ENCODE measurements at regions of chr22 and their contacts with region 1.

Region 1: DNA sequence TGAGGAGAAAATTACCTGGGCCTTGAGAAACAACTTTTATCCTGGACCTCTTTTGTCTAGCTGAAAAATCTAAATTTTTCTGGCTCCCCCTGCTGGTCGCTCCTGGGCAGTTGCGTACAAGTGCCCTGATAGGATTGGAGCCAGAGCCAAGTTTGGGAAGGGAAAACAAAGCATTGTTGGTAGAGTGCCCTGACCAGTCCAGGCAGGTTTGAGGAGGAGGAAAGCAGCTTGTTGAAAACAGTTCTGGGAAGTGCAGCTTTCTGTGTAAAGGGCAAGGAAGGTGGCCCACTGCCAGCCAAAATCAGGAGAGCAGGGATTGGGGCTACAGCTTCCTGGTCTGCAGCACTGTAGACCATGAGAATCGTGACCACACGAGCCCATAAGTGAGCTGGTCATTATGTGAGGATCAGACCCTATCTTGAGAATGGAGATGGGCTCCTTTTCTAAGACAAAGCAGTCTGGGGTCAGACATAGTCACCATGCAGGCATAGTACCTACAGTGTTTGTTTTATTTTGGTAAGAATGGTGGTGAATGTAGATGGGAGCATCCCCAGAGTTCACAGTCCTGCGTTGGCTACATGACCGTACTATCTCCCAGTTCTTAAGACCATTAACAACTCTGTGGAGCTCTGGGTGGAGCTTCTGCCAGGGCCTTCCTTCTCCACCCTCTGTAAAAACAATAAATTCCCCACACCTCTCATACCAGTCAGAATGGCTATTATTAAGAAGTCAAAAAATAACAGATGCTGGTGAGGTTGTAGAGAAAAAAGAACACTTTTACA is 21.3 kb upstream of the PIK3IP1 start:
- DNase-seq: peak; percentile 41 to 90
- H3K4me3 ChIP-seq: no peak overlapping the region
- H3K27ac ChIP-seq: peak overlapping the region; percentile 86
- H3K4me1 ChIP-seq: peaks cover 2 to 5% (median 3%) of the 10 kb centered on the region in 4 experiments; a peak in 6 of 7 replicates
- H3K27me3 ChIP-seq: no peaks in the 10 kb centered on the region
- CTCF ChIP-seq: peak; percentile 69 to 87 (median 76)
- EP300 ChIP-seq: peak in 1 of 2 experiments; percentile 70; a peak in 1 of 3 replicates
- POLR2A ChIP-seq: peak in 1 of 2 experiments; percentile 62; a peak in 2 of 3 replicates
- RAD21 ChIP-seq: peak; percentile 48 to 70; a peak in 3 of 4 replicates

Region 2: GRCh38 chr22:31080848-31081649 is 232.5 kb before region 1 on chr22 and contains the start of gene SMTN:
- CTCF ChIA-PET with region 1: no interaction called
- POLR2A ChIA-PET with region 1: no interaction called
- DNase-seq: peak; percentile 79 to 99
- H3K4me3 ChIP-seq: peak within 1 kb of the TSS; percentile 69 to 80 (median 74)
- H3K27ac ChIP-seq: peak within 1 kb of the TSS; percentile 84; the same call in 1 of the 2 replicates
- H3K4me1 ChIP-seq: peaks cover 0 to 27% (median 16%) of the 10 kb centered on the region in 4 experiments; a peak in 6 of 7 replicates
- H3K27me3 ChIP-seq: peaks cover 0 to 5% (median 2%) of the 10 kb centered on the region in 4 experiments; a peak in 3 of 7 replicates
- CTCF ChIP-seq: no peak
- EP300 ChIP-seq: no peak
- POLR2A ChIP-seq: peak; percentile 76 to 88
- RAD21 ChIP-seq: no peak
- total RNA-seq, gene SMTN: 20.8 and 26.5 TPM in 2 replicates

Region 3: GRCh38 chr22:31173386-31174145 is 140.0 kb before region 1 on chr22:
- CTCF ChIA-PET with region 1: no interaction called
- POLR2A ChIA-PET with region 1: no interaction called
- DNase-seq: no peak
- H3K4me3 ChIP-seq: no peak overlapping the region
- H3K27ac ChIP-seq: no peak overlapping the region
- H3K4me1 ChIP-seq: no peaks in the 10 kb centered on the region
- H3K27me3 ChIP-seq: no peaks in the 10 kb centered on the region
- CTCF ChIP-seq: no peak
- EP300 ChIP-seq: no peak
- POLR2A ChIP-seq: no peak
- RAD21 ChIP-seq: no peak

Region 4: GRCh38 chr22:31290494-31291471 is 22.8 kb before region 1 on chr22:
- CTCF ChIA-PET with region 1: interaction called, 21 read pairs
- POLR2A ChIA-PET with region 1: interaction called, 13 read pairs
- DNase-seq: peak; percentile 53 to 90
- H3K4me3 ChIP-seq: peak overlapping the region; percentile 28 to 62 (median 38)
- H3K27ac ChIP-seq: no peak overlapping the region
- H3K4me1 ChIP-seq: peaks cover 0 to 14% (median 5%) of the 10 kb centered on the region in 4 experiments; a peak in 4 of 7 replicates
- H3K27me3 ChIP-seq: peaks cover 6 to 30% (median 20%) of the 10 kb centered on the region in 4 experiments; a peak in 6 of 7 replicates
- CTCF ChIP-seq: no peak
- EP300 ChIP-seq: no peak
- POLR2A ChIP-seq: peak in 1 of 2 experiments; percentile 71; a peak in 2 of 3 replicates
- RAD21 ChIP-seq: no peak

Region 5: GRCh38 chr22:31302006-31302405 is 11.6 kb before region 1 on chr22:
- CTCF ChIA-PET with region 1: interaction called, 41 read pairs
- POLR2A ChIA-PET with region 1: interaction called, 5 read pairs
- DNase-seq: no peak
- H3K4me3 ChIP-seq: no peak overlapping the region
- H3K27ac ChIP-seq: no peak overlapping the region
- H3K4me1 ChIP-seq: no peaks in the 10 kb centered on the region
- H3K27me3 ChIP-seq: no peaks in the 10 kb centered on the region
- CTCF ChIP-seq: no peak
- EP300 ChIP-seq: no peak
- POLR2A ChIP-seq: no peak
- RAD21 ChIP-seq: no peak

Region 6: DNA sequence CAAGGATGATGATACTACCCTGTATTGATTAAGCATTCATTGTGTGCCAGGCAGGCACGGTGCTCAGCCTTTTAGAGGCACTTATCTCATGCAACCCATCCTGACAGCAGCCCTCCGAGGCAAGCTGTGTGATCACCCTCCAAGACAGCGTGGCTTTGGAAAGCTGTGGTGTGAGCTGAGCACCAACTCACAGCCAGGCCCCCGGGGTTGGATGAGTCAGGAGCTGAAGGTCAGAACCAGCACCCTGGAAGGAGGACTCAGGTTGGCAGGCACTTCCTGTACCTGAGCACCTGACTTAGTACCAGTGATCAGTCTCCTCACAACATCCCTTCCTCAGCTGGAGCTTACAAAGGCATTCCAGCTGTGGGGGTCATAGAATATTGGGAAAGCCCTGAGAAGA is 23.6 kb after region 1 on chr22:
- CTCF ChIA-PET with region 1: interaction called, 7 read pairs
- POLR2A ChIA-PET with region 1: interaction called, 11 read pairs
- DNase-seq: no peak
- H3K4me3 ChIP-seq: no peak overlapping the region
- H3K27ac ChIP-seq: no peak overlapping the region
- H3K4me1 ChIP-seq: peaks cover 0 to 25% (median 13%) of the 10 kb centered on the region in 4 experiments; a peak in 6 of 7 replicates
- H3K27me3 ChIP-seq: no peaks in the 10 kb centered on the region
- CTCF ChIP-seq: no peak
- EP300 ChIP-seq: no peak
- POLR2A ChIP-seq: no peak
- RAD21 ChIP-seq: no peak

Region 7: GRCh38 chr22:31399211-31400028 is 85.9 kb after region 1 on chr22 and contains the start of gene DRG1:
- CTCF ChIA-PET with region 1: no interaction called
- POLR2A ChIA-PET with region 1: no interaction called
- DNase-seq: peak; percentile 85 to 96
- H3K4me3 ChIP-seq: peak within 1 kb of the TSS; percentile 62 to 96 (median 90)
- H3K27ac ChIP-seq: peak within 1 kb of the TSS; percentile 61
- H3K4me1 ChIP-seq: peaks cover 0 to 2% (median 0%) of the 10 kb centered on the region in 4 experiments; a peak in 1 of 7 replicates
- H3K27me3 ChIP-seq: no peaks in the 10 kb centered on the region
- CTCF ChIP-seq: no peak
- EP300 ChIP-seq: no peak
- POLR2A ChIP-seq: peak; percentile 92 to 98
- RAD21 ChIP-seq: peak in 1 of 2 experiments; percentile 33; a peak in 2 of 4 replicates
- total RNA-seq, gene DRG1: 70.8 and 81.9 TPM in 2 replicates

Region 8: DNA sequence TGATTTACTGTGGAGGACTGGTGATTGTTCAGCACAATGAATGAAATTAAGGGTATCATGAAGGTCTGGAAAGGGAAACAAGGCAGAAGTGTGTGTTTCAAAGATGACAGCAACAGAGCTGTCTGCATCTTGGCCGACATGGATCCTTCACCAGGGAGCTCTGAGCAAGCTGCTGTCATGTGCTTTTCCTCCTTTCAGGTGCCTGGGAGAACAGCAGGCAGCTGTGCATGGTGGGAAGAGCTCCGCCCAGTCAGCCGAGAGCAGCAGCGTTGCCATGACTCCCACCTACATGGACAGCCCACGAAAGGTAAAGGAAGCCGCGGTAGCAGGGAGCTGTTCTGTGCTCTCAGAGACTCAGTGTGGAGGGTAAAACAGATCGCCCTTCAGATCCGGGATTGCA is 543.7 kb after region 1 on chr22:
- CTCF ChIA-PET with region 1: no interaction called
- POLR2A ChIA-PET with region 1: no interaction called
- DNase-seq: peak; percentile 57 to 76
- H3K4me3 ChIP-seq: no peak overlapping the region
- H3K27ac ChIP-seq: no peak overlapping the region
- H3K4me1 ChIP-seq: peaks cover 0 to 2% (median under 1%) of the 10 kb centered on the region in 4 experiments; a peak in 2 of 7 replicates
- H3K27me3 ChIP-seq: no peaks in the 10 kb centered on the region; a peak in 1 of 7 replicates
- CTCF ChIP-seq: no peak
- EP300 ChIP-seq: no peak
- POLR2A ChIP-seq: peak; percentile 24 to 30; a peak in 2 of 3 replicates
- RAD21 ChIP-seq: no peak

Measured in H1 (cell line).